Activated naive CD4-positive, alpha-beta T cell treated with anti-CD3 and anti-CD28 coated beads for 36 hours (primary cell): ENCODE measurements at regions of chrX and their contacts with region 1.

Region 1: DNA sequence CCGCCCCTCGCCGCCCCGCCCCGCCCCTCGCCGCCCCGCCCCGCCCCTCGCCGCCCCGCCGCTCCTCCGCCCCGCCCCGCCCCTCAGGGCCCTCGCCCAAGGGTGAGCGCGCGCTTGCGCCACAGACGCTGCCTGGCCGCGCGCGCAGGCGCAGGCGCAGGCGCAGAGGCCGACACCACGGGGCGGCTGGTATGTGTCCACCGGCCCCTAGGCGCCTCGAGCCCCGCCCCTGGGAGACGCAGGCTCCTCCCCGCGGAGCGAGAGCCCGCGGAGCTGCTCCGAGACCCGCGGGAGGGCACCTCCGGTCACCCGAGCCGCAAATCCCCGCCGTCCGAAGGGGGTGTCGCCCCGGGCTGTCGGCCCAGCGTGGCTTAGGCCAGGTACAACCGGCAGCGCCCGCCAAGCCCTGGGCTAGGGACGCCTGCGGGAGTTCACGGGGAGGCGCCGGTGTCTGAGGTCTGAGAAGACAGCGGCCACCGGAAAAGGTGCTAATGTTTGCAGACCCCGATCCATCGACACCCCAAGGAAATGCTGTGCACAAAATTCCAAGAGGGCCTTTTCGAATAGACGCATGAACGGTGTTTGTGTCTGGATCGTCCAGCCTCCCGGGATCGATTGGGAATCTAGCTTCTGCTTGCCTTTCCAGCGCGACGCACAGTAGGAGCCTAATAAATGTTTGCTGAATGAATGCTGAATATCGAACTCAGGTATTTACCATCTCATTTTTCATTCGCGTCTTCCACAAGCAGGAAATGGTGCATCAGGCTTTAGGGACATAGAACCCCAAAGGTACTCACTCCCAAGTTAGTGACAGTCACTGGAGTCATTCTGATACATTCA is 473 bp upstream of the CCNQ start:
- DNase-seq: peak; percentile 86
- H3K4me3 Mint-ChIP-seq: peak overlapping the region; percentile 82
- H3K27ac Mint-ChIP-seq: peak overlapping the region; percentile 68
- H3K4me1 Mint-ChIP-seq: peaks cover 49% of the 10 kb centered on the region
- H3K27me3 Mint-ChIP-seq: no peaks in the 10 kb centered on the region

Region 2: GRCh38 chrX:153032397-153033118 is 566.9 kb before region 1 on chrX:
- CTCF ChIA-PET with region 1: no interaction called
- intact Hi-C with region 1: loop called (anchors 5 kb)
- DNase-seq: peak; percentile 73
- H3K4me3 Mint-ChIP-seq: peak overlapping the region; percentile 81
- H3K27ac Mint-ChIP-seq: peak overlapping the region; percentile 87
- H3K4me1 Mint-ChIP-seq: peaks cover 8% of the 10 kb centered on the region
- H3K27me3 Mint-ChIP-seq: no peaks in the 10 kb centered on the region

Region 3: GRCh38 chrX:153470435-153471363 is 128.7 kb before region 1 on chrX and contains the start of gene HAUS7:
- CTCF ChIA-PET with region 1: no interaction called
- intact Hi-C with region 1: loop called (anchors 1 kb)
- DNase-seq: peak; percentile 93
- H3K4me3 Mint-ChIP-seq: peak within 1 kb of the TSS; percentile 78
- H3K27ac Mint-ChIP-seq: peak within 1 kb of the TSS; percentile 77
- H3K4me1 Mint-ChIP-seq: peaks cover 15% of the 10 kb centered on the region
- H3K27me3 Mint-ChIP-seq: no peaks in the 10 kb centered on the region
- total RNA-seq, gene HAUS7: 63.5 to 68.5 TPM

Region 4: DNA sequence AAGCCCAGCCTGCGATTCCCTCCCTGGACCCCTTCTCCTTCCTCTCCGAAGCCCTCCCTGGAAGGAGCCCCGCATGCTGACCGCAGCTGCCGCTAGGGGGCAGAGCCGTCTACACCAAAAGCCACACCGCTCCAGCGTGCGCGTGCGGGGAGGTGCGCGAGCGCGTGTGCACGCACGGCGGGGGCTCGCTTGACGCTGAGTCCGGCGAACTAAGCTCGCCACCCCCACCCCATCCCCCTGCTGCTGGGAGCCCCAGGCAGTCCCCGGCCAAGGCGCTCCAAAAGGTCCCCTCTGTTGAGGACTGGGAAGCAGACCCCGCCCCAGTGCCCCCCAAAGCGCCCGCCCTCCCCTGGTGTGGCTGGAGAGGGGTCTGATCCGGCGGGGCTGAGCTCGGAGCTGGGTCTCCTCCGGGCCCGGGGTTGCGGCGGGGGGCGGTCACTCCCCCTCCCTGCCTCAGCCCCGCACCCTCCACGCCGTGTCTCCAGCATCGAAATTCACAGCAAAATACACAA is 10.6 kb after region 1 on chrX:
- CTCF ChIA-PET with region 1: interaction called, 15 read pairs
- intact Hi-C with region 1: no loop called
- DNase-seq: peak; percentile 78
- H3K4me3 Mint-ChIP-seq: peak overlapping the region; percentile 63
- H3K27ac Mint-ChIP-seq: no peak overlapping the region
- H3K4me1 Mint-ChIP-seq: peaks cover 6% of the 10 kb centered on the region
- H3K27me3 Mint-ChIP-seq: no peaks in the 10 kb centered on the region

Region 5: GRCh38 chrX:153724252-153725040 is 125.0 kb after region 1 on chrX and contains the starts of genes ABCD1 and BCAP31:
- CTCF ChIA-PET with region 1: no interaction called
- intact Hi-C with region 1: loop called (anchors 1 kb)
- DNase-seq: peak; percentile 88
- H3K4me3 Mint-ChIP-seq: peak within 1 kb of the TSS; percentile 85
- H3K27ac Mint-ChIP-seq: peak within 1 kb of the TSS; percentile 81
- H3K4me1 Mint-ChIP-seq: peaks cover 25% of the 10 kb centered on the region
- H3K27me3 Mint-ChIP-seq: no peaks in the 10 kb centered on the region
- total RNA-seq, gene ABCD1: 2.5 to 3.4 TPM
- total RNA-seq, gene BCAP31: 69.5 to 71.2 TPM